Caco-2 (cell line): ENCODE measurements at regions of chr7 and their contacts with region 1.

Region 1: DNA sequence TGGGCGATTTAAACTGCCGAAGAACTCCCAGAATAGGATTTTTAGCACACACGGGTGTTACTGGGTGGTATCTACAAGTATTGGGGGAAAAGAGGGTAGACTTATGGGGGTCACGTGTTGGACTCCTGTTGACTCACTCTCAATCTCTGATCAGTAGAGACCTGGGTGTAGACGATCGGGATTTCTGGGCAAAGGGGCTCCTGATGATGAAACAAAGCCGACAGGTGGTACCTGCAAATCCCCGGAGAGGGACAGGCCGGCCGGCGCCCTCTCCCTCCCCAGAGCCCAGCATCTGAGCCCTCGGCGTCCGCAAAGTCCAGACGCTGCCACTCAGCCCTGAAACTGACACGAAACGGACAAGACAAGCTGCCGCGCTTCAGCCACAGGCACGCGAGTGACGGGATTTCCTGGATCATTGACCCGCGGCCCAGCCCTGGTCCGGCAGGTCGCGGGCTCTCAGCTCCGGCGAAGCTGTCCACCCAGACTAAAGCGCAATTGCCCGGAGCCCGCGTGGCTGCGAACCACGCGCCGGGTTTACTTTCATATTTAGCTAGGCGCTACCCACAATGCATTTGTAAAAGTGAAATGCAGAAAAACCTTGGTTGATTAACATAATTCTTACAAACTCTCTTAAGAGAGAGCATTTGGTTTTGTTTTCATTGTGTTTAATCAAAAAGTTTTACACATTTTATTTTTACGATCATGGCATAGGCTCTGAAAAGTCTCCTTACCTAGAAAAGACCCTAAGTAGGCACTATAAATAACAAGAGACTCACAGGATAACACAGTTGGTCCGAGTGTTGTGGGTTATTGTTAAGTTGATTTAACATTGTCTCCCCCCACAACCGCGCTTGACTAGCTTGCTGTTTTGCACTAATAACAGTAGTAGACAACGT is 56.9 kb upstream of the EZH2 start:
- DNase-seq: peak; percentile 80 to 81
- H3K4me3 ChIP-seq: peak overlapping the region; percentile 88
- H3K4me3 Mint-ChIP-seq: peak overlapping the region; percentile 87
- H3K27ac Mint-ChIP-seq: peak overlapping the region; percentile 95
- H3K4me1 ChIP-seq: no peaks in the 10 kb centered on the region; the same call in 1 of the 2 replicates
- H3K4me1 Mint-ChIP-seq: peaks cover 7% of the 10 kb centered on the region
- H3K27me3 ChIP-seq: no peaks in the 10 kb centered on the region
- H3K27me3 Mint-ChIP-seq: no peaks in the 10 kb centered on the region
- CTCF ChIP-seq: no peak

Region 2: GRCh38 chr7:148856891-148857290 is 84.1 kb before region 1 on chr7:
- CTCF ChIA-PET with region 1: interaction called, 10 read pairs
- POLR2A ChIA-PET with region 1: no interaction called
- intact Hi-C with region 1: loop called (anchors 5 kb)
- DNase-seq: no peak
- H3K4me3 ChIP-seq: no peak overlapping the region
- H3K4me3 Mint-ChIP-seq: no peak overlapping the region
- H3K27ac Mint-ChIP-seq: no peak overlapping the region
- H3K4me1 ChIP-seq: no peaks in the 10 kb centered on the region; the same call in 1 of the 2 replicates
- H3K4me1 Mint-ChIP-seq: peaks cover 9% of the 10 kb centered on the region
- H3K27me3 ChIP-seq: no peaks in the 10 kb centered on the region
- H3K27me3 Mint-ChIP-seq: no peaks in the 10 kb centered on the region
- CTCF ChIP-seq: no peak

Region 3: DNA sequence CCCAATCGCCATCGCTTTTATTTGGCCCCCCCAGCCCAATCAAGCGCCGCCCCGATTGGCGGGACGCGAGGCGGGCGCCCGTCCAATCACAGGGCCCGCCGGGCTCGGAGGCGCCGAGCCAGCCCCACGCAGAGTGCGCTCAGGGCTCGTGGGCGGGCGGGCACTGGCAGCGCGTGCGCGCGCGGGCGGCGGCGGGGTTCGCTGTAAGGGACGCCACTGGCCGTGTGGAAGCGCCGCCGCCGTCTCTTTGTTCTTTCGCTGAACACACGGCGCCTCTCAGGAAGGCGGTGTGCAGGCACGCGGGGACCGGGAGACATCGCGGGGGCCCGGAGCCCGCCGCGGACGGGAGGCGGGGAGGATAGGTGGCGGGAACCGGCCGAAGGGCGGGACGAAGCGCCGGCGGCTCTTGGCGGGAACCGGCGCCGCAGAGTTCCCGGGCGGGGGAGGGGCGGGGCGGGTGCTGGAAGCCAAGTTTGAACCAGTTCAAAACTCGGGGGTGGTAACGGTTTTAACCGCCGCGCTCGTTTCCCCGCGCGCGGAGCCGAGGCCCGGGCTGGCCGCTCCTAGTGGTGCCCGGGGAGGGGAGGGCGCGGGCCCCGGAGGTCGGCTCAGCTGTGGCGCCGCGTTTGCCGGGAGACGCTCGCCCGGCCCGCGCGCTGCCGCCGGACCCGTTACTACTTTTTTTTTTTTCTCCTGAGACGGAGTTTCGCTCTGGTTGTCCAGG is 56.5 kb before region 1 on chr7:
- CTCF ChIA-PET with region 1: no interaction called
- POLR2A ChIA-PET with region 1: no interaction called
- intact Hi-C with region 1: loop called (anchors 1 kb)
- DNase-seq: peak; percentile 91 to 96
- H3K4me3 ChIP-seq: peak overlapping the region; percentile 98
- H3K4me3 Mint-ChIP-seq: peak overlapping the region; percentile 95
- H3K27ac Mint-ChIP-seq: peak overlapping the region; percentile 93
- H3K4me1 ChIP-seq: peaks cover 6% of the 10 kb centered on the region; the same call in 1 of the 2 replicates
- H3K4me1 Mint-ChIP-seq: no peaks in the 10 kb centered on the region
- H3K27me3 ChIP-seq: no peaks in the 10 kb centered on the region
- H3K27me3 Mint-ChIP-seq: no peaks in the 10 kb centered on the region
- CTCF ChIP-seq: no peak

Region 4: DNA sequence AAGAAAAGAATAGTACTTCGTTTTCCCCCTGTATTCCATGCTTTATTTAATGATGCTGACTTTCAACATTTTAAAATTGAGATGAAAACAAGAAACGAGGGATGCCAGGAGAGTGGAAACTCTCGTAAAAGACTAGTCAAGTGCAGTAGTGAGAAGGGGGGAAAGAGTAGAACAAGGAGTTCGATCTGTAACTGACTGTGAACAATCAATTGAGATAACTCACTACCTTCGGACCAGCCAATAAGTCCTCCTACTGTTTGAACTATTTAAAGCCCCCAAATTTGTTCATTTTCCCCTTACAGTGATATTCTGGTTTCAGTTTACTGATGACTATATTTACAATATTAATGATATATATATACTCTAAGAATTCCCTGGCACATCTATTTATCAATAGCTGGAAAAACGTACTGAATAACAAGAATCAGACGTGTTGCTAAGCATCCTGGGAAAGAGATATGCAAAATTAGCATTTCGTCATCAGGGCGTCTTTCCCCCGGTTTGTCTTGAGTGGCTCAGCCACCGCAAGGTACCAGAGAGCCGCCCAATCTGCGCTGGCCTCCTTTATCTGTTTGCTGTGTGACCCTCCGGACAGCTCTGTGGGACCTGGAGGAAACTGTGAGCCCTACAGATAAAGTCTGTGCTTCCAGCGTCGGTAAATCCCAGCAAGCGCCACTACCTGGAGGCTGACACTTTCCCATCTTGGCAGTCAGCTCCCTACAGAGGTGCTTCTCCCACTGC is 46.2 kb after region 1 on chr7:
- CTCF ChIA-PET with region 1: no interaction called
- POLR2A ChIA-PET with region 1: no interaction called
- intact Hi-C with region 1: loop called (anchors 2 kb)
- DNase-seq: peak; percentile 90 to 95
- H3K4me3 ChIP-seq: peak overlapping the region; percentile 50
- H3K4me3 Mint-ChIP-seq: peak overlapping the region; percentile 84
- H3K27ac Mint-ChIP-seq: peak overlapping the region; percentile 85
- H3K4me1 ChIP-seq: peaks cover 13% of the 10 kb centered on the region
- H3K4me1 Mint-ChIP-seq: peaks cover 44% of the 10 kb centered on the region
- H3K27me3 ChIP-seq: no peaks in the 10 kb centered on the region
- H3K27me3 Mint-ChIP-seq: no peaks in the 10 kb centered on the region
- CTCF ChIP-seq: no peak

Region 5: DNA sequence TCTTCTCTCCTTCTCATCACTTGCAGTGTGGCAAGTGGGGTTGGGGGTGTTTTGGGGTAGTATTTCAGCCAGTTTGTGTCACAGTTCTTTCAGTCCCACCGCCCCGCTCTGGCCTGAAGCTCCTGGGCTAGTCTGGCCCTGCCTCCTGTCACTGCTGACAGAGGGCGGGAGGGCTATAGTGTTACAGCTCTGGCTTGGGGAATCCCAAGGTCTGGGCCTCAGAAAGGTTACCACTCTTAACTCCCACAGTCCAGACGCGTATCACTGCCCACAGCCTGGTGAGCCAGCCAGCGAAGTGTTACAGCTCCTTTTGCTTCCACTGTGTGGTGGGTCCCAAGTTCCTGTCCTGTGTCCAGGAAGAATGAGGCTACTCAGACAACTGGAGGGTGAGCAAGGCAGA is 463.9 kb after region 1 on chr7:
- CTCF ChIA-PET with region 1: no interaction called
- POLR2A ChIA-PET with region 1: no interaction called
- intact Hi-C with region 1: no loop called
- DNase-seq: no peak
- H3K4me3 ChIP-seq: no peak overlapping the region
- H3K4me3 Mint-ChIP-seq: no peak overlapping the region
- H3K27ac Mint-ChIP-seq: no peak overlapping the region
- H3K4me1 ChIP-seq: no peaks in the 10 kb centered on the region
- H3K4me1 Mint-ChIP-seq: no peaks in the 10 kb centered on the region
- H3K27me3 ChIP-seq: no peaks in the 10 kb centered on the region; the same call in 1 of the 2 replicates
- H3K27me3 Mint-ChIP-seq: no peaks in the 10 kb centered on the region
- CTCF ChIP-seq: no peak